GM12878 (cell line): ENCODE measurements at regions of chr17 and their contacts with region 1.

Region 1: GRCh38 chr17:40113110-40113906 is 8.5 kb upstream of the MSL1 start:
- DNase-seq: peak; percentile 83
- ATAC-seq: peak; percentile 91
- H3K4me3 ChIP-seq: peak overlapping the region; percentile 37; the same call in 1 of the 2 replicates
- H3K27ac ChIP-seq: peak overlapping the region; percentile 82
- H3K4me1 ChIP-seq: peaks cover 28% of the 10 kb centered on the region
- H3K27me3 ChIP-seq: no peaks in the 10 kb centered on the region
- CTCF ChIP-seq: peak; percentile 84 to 98 (median 91); a peak in 4 of 6 replicates
- EP300 ChIP-seq: no peak; a peak in 1 of 4 replicates
- POLR2A ChIP-seq: peak; percentile 65
- RAD21 ChIP-seq: peak; percentile 92

Region 2: DNA sequence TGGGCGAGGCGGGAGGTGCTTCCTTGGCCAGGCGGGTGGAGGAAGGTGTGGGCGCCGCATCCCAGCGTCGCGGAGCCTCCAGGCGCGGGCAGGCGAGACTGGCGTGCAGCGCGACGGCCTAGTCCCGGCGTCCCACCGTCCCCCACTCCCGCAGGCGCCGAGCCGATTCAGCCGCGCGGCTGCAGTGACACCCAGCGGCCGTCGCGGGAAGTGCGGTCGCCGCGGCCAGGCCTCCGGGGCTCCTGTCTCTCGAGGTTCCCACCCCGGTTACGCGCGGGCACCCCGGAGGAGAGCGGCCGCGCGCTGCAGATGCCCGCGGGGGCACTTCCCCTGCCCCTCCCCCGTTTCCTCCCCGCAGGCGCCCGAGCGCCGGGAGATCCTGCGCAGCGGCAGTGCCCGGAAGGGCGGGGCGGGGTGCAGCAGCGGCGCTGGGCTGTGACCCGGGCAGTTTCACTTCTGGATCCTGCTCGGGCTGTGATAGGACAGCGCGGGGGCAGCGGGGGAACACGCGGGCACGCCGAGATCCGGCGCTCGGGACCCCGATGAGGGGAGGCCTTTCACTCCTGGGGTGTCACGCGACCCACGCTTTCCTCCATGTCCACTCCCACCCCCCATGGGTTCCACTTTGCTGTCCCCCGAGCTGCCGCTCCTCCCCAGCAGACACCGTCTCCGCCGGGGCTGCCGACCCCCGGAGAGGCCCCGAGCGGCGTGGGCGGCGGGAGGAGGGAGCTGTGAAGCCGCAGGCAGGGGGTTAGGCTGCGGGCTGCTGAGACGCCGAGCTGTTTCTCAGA is 359.0 kb before region 1 on chr17:
- CTCF ChIA-PET with region 1: no interaction called
- POLR2A ChIA-PET with region 1: no interaction called
- RAD21 ChIA-PET with region 1: no interaction called
- SMC1A ChIA-PET with region 1: no interaction called
- in situ Hi-C with region 1: no loop called
- intact Hi-C with region 1: no loop called
- DNase-seq: peak; percentile 87
- ATAC-seq: peak; percentile 82
- H3K4me3 ChIP-seq: peak overlapping the region; percentile 66
- H3K27ac ChIP-seq: peak overlapping the region; percentile 96
- H3K4me1 ChIP-seq: peaks cover 53% of the 10 kb centered on the region
- H3K27me3 ChIP-seq: no peaks in the 10 kb centered on the region
- CTCF ChIP-seq: peak; percentile 81 to 93 (median 88)
- EP300 ChIP-seq: peak; percentile 65 to 73; a peak in 3 of 4 replicates
- POLR2A ChIP-seq: peak; percentile 75
- RAD21 ChIP-seq: peak; percentile 80

Region 3: DNA sequence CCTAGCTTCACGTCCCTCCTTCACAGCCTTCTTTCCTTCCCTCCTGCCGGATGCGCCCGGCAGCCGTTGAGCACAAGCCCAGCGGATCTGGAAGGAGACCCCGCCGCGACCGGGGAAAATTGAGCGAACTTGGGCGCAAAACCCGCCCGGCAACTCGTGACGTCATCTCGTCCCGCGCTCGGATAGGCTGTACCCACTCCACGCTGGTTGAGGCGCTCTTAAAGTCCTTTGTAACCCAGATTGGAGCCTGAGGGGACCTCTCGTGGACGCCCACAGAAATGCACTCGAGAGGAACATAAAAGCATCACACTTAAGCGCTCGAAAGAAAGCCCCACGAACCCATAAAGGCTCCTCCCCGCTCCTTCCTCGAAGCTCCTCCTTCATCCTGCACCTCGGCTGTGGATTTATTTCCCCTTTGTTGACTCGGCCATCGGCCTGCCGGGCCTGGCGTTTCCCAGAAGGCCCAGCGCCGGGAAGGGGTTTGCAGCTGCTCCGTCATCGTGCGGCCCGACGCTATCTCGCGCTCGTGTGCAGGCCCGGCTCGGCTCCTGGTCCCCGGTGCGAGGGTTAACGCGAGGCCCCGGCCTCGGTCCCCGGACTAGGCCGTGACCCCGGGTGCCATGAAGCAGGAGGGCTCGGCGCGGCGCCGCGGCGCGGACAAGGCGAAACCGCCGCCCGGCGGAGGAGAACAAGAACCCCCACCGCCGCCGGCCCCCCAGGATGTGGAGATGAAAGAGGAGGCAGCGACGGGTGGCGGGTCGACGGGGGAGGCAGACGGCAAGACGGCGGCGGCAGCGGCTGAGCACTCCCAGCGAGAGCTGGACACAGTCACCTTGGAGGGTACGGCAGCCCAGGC is 132.7 kb before region 1 on chr17 and contains the start of gene PSMD3:
- CTCF ChIA-PET with region 1: interaction called, 7 read pairs
- POLR2A ChIA-PET with region 1: interaction called, 4 read pairs
- RAD21 ChIA-PET with region 1: interaction called, 11 read pairs
- SMC1A ChIA-PET with region 1: interaction called, 5 read pairs
- in situ Hi-C with region 1: no loop called
- intact Hi-C with region 1: no loop called
- DNase-seq: peak; percentile 100
- ATAC-seq: peak; percentile 94
- H3K4me3 ChIP-seq: peak within 1 kb of the TSS; percentile 90
- H3K27ac ChIP-seq: peak within 1 kb of the TSS; percentile 90
- H3K4me1 ChIP-seq: peaks cover 6% of the 10 kb centered on the region
- H3K27me3 ChIP-seq: no peaks in the 10 kb centered on the region; a peak in 1 of 4 replicates
- CTCF ChIP-seq: peak; percentile 80 to 97 (median 92)
- EP300 ChIP-seq: peak; percentile 21 to 44; a peak in 1 of 4 replicates
- POLR2A ChIP-seq: peak; percentile 93
- RAD21 ChIP-seq: peak; percentile 92
- polyA plus RNA-seq, gene PSMD3: 2.2 to 2.6 TPM

Region 4: DNA sequence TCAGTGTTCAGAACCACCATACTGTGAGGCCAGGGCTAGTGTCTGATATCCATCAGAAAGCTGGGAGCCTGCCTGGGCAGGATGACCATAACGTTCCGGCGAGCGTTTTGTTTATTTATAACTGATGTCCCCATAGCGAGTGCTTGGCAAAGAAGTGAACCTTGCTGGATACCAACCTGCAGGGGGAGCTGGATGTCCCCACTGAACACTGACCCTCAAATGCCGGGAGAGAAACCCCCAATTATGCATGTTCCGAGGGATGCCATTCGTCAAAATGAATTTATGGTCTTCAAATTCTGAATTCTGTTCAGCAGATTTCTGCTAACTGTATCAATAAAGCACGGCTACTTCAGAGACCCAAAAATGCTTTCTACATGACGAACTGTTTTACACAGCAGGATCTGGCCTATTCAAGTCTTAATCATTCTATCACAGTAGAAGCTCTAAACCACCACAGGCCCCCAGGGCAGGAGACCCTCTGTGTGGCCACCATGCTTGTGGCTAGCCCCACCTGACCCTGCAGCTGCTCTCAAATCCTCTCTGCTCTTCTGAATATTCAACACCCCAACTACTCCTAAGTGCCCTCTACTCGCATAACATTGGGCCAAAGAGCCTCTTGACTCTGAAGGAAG is 74.3 kb before region 1 on chr17:
- CTCF ChIA-PET with region 1: interaction called, 43 read pairs
- POLR2A ChIA-PET with region 1: no interaction called
- RAD21 ChIA-PET with region 1: no interaction called
- SMC1A ChIA-PET with region 1: interaction called, 4 read pairs
- in situ Hi-C with region 1: no loop called
- intact Hi-C with region 1: no loop called
- DNase-seq: no peak
- ATAC-seq: no peak
- H3K4me3 ChIP-seq: no peak overlapping the region
- H3K27ac ChIP-seq: no peak overlapping the region
- H3K4me1 ChIP-seq: no peaks in the 10 kb centered on the region
- H3K27me3 ChIP-seq: no peaks in the 10 kb centered on the region
- CTCF ChIP-seq: peak; percentile 18 to 35 (median 27); a peak in 3 of 6 replicates
- EP300 ChIP-seq: no peak
- POLR2A ChIP-seq: no peak
- RAD21 ChIP-seq: 0 out of 2 replicates have a peak, but pooled peaks have one; percentile 21

Region 5: GRCh38 chr17:40075201-40075941 is 37.9 kb before region 1 on chr17:
- CTCF ChIA-PET with region 1: interaction called, 120 read pairs
- POLR2A ChIA-PET with region 1: interaction called, 9 read pairs
- RAD21 ChIA-PET with region 1: interaction called, 42 read pairs
- SMC1A ChIA-PET with region 1: interaction called, 56 read pairs
- in situ Hi-C with region 1: no loop called
- intact Hi-C with region 1: no loop called
- DNase-seq: no peak
- ATAC-seq: peak; percentile 89
- H3K4me3 ChIP-seq: no peak overlapping the region
- H3K27ac ChIP-seq: no peak overlapping the region
- H3K4me1 ChIP-seq: peaks cover 6% of the 10 kb centered on the region
- H3K27me3 ChIP-seq: no peaks in the 10 kb centered on the region
- CTCF ChIP-seq: peak; percentile 72 to 91 (median 81)
- EP300 ChIP-seq: no peak
- POLR2A ChIP-seq: no peak
- RAD21 ChIP-seq: peak; percentile 57

Region 6: GRCh38 chr17:40157973-40158372 is 44.7 kb after region 1 on chr17:
- CTCF ChIA-PET with region 1: interaction called, 34 read pairs
- POLR2A ChIA-PET with region 1: interaction called, 4 read pairs
- RAD21 ChIA-PET with region 1: interaction called, 25 read pairs
- SMC1A ChIA-PET with region 1: interaction called, 44 read pairs
- in situ Hi-C with region 1: no loop called
- intact Hi-C with region 1: loop called (anchors 5 kb)
- DNase-seq: no peak
- ATAC-seq: no peak
- H3K4me3 ChIP-seq: no peak overlapping the region
- H3K27ac ChIP-seq: 0 out of 2 replicates have a peak overlapping the region, but pooled peaks have one; percentile 19
- H3K4me1 ChIP-seq: peaks cover 12% of the 10 kb centered on the region
- H3K27me3 ChIP-seq: no peaks in the 10 kb centered on the region
- CTCF ChIP-seq: no peak
- EP300 ChIP-seq: no peak
- POLR2A ChIP-seq: no peak
- RAD21 ChIP-seq: no peak

Region 7: GRCh38 chr17:40191237-40192208 is 78.2 kb after region 1 on chr17:
- CTCF ChIA-PET with region 1: interaction called, 138 read pairs
- POLR2A ChIA-PET with region 1: interaction called, 12 read pairs
- RAD21 ChIA-PET with region 1: interaction called, 99 read pairs
- SMC1A ChIA-PET with region 1: interaction called, 94 read pairs
- in situ Hi-C with region 1: no loop called
- intact Hi-C with region 1: no loop called
- DNase-seq: peak; percentile 30
- ATAC-seq: peak; percentile 93
- H3K4me3 ChIP-seq: peak overlapping the region; percentile 83
- H3K27ac ChIP-seq: no peak overlapping the region
- H3K4me1 ChIP-seq: peaks cover 24% of the 10 kb centered on the region
- H3K27me3 ChIP-seq: no peaks in the 10 kb centered on the region; a peak in 1 of 4 replicates
- CTCF ChIP-seq: peak; percentile 82 to 91 (median 89)
- EP300 ChIP-seq: no peak
- POLR2A ChIP-seq: peak; percentile 57
- RAD21 ChIP-seq: peak; percentile 50; the same call in 1 of the 2 replicates